ENCODE measurements at regions of chr14 and their contacts with region 1.

Region 1: GRCh38 chr14:103880348-103881267 is 33.2 kb upstream of the PPP1R13B start:
- DNase-seq: peak; percentile 32
- H3K4me3 Mint-ChIP-seq: peak overlapping the region; percentile 55
- H3K27ac Mint-ChIP-seq: no peak overlapping the region
- H3K4me1 Mint-ChIP-seq: peaks cover 18% of the 10 kb centered on the region
- H3K27me3 Mint-ChIP-seq: no peaks in the 10 kb centered on the region

Region 2: DNA sequence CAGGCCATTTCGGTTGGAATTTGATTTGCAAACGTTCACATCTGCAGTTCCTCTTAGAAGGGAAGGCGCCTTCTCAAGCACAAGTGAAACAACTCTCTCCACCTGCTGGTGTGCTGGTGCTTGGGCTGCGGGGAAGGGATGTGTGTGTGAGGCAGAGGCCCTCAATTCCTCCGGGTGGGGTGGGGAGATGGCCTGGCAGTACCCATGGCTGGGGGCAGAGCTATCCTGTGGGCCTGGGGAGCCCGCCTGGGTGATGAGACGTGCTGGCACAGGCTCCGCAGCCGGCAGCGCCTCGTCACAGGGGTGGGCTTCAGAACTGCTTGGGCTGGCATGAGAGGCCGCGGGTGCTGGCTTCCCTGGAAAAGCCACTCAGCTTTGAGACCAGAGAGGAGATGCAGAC is 18.7 kb after region 1 on chr14:
- CTCF ChIA-PET with region 1: interaction called, 24 read pairs
- intact Hi-C with region 1: no loop called
- DNase-seq: no peak
- H3K4me3 Mint-ChIP-seq: no peak overlapping the region
- H3K27ac Mint-ChIP-seq: no peak overlapping the region
- H3K4me1 Mint-ChIP-seq: peaks cover 2% of the 10 kb centered on the region
- H3K27me3 Mint-ChIP-seq: no peaks in the 10 kb centered on the region